ENCODE measurements at regions of chr12 and their contacts with region 1.

Region 1: GRCh38 chr12:32399337-32400113 is at the start of gene FGD4:
- DNase-seq: peak; percentile 56
- ATAC-seq: peak; percentile 98
- H3K4me3 ChIP-seq: peak within 1 kb of the TSS; percentile 47
- H3K27ac ChIP-seq: no peak within 1 kb of the TSS
- H3K4me1 ChIP-seq: no peaks in the 10 kb centered on the region
- H3K27me3 ChIP-seq: peaks cover 40% of the 10 kb centered on the region
- CTCF ChIP-seq: peak; percentile 38; the same call in 1 of the 2 replicates
- POLR2A ChIP-seq: no peak
- RAD21 ChIP-seq: 0 out of 2 replicates have a peak, but pooled peaks have one; percentile 11
- total RNA-seq, gene FGD4: 8.8 and 10.3 TPM in 2 replicates

Region 2: GRCh38 chr12:31797230-31797872 is 602.2 kb before region 1 on chr12:
- CTCF ChIA-PET with region 1: no interaction called
- POLR2A ChIA-PET with region 1: no interaction called
- dilution Hi-C with region 1: no loop called
- in situ Hi-C with region 1: no loop called
- intact Hi-C with region 1: loop called (anchors 5 kb)
- DNase-seq: no peak
- ATAC-seq: no peak
- H3K4me3 ChIP-seq: no peak overlapping the region
- H3K27ac ChIP-seq: no peak overlapping the region
- H3K4me1 ChIP-seq: no peaks in the 10 kb centered on the region
- H3K27me3 ChIP-seq: no peaks in the 10 kb centered on the region
- CTCF ChIP-seq: no peak
- POLR2A ChIP-seq: no peak
- RAD21 ChIP-seq: no peak

Measured in IMR-90 (cell line).